Endothelial cell of umbilical vein (primary cell): ENCODE measurements at regions of chr11 and their contacts with region 1.

Region 1: DNA sequence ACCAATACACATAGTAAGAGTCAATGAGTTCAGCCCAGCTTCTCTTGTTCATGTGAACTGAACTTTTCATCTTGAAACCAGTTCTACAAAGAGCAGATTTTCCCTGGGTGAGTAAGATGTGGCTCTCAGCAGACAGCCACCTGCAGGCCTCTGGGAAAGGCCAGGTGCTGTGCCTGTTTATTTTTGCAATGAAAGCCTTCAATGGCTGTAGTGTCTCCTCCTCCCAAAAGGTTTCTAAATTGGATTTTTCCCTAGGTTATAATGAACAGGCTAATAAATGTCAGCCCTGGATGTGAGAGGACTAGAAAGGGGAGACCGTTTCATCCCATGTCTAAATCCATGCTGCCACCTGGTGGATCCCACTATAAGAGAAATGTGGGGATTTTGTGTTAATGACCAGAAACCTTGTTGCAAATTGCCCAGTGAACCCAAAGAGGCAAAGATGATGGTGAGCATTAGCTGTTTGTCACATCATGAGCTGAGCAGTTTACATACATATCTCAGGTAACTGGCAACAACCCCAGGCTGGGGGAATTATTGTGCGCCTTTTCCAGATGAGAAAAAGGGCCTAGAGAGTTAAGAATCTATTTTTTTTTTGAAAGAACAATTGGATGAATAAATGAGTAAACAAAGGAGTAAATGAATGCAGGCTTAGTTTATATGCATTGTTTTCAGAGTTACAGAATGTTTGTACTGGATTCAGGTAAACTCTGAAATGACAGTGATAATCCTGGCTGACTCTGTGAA is 12.7 kb downstream of the C11orf91 start:
- DNase-seq: peak; percentile 75
- H3K4me3 ChIP-seq: no peak overlapping the region
- H3K27ac ChIP-seq: no peak overlapping the region
- H3K4me1 ChIP-seq: peaks cover 44% of the 10 kb centered on the region
- H3K27me3 ChIP-seq: no peaks in the 10 kb centered on the region
- CTCF ChIP-seq: peak; percentile 51 to 74
- POLR2A ChIP-seq: no peak

Region 2: GRCh38 chr11:32960553-32961164 is 727.2 kb before region 1 on chr11:
- CTCF ChIA-PET with region 1: no interaction called
- POLR2A ChIA-PET with region 1: no interaction called
- dilution Hi-C with region 1: no loop called
- intact Hi-C with region 1: loop called (anchors 10 kb)
- DNase-seq: peak; percentile 60
- H3K4me3 ChIP-seq: no peak overlapping the region
- H3K27ac ChIP-seq: no peak overlapping the region
- H3K4me1 ChIP-seq: no peaks in the 10 kb centered on the region
- H3K27me3 ChIP-seq: no peaks in the 10 kb centered on the region
- CTCF ChIP-seq: peak; percentile 39 to 40
- POLR2A ChIP-seq: no peak

Region 3: DNA sequence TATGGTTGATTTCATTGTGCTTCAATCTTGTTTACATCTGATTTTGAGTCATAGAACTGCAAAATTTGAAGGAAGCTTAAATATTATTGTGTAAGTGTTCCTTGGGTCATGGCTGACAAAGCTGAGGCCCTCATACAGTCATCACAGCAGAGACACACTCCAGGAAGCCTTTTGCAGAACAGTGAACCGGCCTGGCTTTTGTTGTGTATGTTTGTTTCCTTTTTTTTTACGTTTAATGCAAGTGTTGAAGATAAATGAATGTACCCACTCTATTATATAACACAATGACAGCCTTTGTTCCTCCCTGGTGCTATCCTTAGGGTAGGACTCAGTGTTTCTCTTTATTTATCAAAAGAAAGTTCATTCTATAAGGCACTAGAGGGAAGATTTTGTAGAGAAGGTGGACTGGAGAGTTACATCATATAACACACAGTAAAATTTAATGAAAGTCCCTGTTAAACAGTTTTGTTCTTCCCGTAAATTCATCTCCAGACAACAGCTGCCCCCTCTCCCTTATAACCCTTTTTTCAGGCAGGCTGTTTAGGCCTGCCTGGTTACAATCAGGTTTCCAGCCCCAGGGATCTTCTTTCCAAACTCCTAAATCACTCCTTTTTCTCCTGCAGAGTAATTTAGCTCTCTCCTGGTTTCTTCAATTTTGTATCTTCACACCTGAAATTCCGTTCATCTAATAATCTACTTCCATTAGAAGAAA is 492.3 kb before region 1 on chr11:
- CTCF ChIA-PET with region 1: no interaction called
- POLR2A ChIA-PET with region 1: no interaction called
- dilution Hi-C with region 1: no loop called
- intact Hi-C with region 1: no loop called
- DNase-seq: no peak
- H3K4me3 ChIP-seq: no peak overlapping the region
- H3K27ac ChIP-seq: no peak overlapping the region
- H3K4me1 ChIP-seq: no peaks in the 10 kb centered on the region
- H3K27me3 ChIP-seq: no peaks in the 10 kb centered on the region
- CTCF ChIP-seq: no peak
- POLR2A ChIP-seq: no peak

Region 4: DNA sequence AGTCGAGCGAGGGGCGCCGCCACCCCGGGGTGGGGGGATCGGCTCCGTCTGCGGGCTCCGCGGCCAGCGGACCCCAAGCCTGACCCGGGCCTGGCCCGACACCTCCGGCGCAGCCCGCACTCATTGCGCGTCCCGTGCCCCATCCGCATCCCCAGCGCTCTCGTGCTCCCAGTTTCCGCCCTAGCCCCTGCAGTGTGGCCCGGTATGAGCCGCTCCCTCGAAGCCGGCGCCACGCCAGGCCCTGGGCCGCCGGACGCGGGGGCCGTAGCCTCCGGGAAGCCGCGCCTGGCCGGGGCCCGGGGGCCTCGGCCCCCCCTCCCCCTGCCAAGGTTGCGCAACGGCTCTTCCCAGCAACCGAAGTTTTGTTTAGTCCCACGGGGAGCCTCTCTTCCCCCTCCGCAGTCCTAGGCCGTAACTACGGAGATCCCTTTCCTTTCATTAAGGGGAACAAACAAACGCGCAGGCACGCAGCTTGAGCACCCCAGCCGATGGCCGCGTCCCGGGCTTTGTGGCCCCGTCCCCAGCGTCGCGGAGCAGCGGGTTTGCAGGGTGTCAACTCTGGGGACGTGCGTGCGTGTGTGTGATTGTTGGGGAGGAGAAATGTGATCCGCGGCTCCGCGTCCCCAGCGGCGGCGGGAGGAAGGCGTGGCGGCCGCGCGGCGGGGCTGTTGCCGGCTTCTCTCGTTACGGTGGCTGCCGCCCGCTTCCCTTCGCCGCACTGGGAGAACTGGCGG is 429.8 kb before region 1 on chr11:
- CTCF ChIA-PET with region 1: no interaction called
- POLR2A ChIA-PET with region 1: no interaction called
- dilution Hi-C with region 1: no loop called
- intact Hi-C with region 1: loop called (anchors 2 kb)
- DNase-seq: peak; percentile 82
- H3K4me3 ChIP-seq: peak overlapping the region; percentile 59 to 93 (median 88)
- H3K27ac ChIP-seq: peak overlapping the region; percentile 98
- H3K4me1 ChIP-seq: peaks cover 18% of the 10 kb centered on the region
- H3K27me3 ChIP-seq: no peaks in the 10 kb centered on the region
- CTCF ChIP-seq: peak; percentile 7 to 29
- POLR2A ChIP-seq: no peak

Region 5: DNA sequence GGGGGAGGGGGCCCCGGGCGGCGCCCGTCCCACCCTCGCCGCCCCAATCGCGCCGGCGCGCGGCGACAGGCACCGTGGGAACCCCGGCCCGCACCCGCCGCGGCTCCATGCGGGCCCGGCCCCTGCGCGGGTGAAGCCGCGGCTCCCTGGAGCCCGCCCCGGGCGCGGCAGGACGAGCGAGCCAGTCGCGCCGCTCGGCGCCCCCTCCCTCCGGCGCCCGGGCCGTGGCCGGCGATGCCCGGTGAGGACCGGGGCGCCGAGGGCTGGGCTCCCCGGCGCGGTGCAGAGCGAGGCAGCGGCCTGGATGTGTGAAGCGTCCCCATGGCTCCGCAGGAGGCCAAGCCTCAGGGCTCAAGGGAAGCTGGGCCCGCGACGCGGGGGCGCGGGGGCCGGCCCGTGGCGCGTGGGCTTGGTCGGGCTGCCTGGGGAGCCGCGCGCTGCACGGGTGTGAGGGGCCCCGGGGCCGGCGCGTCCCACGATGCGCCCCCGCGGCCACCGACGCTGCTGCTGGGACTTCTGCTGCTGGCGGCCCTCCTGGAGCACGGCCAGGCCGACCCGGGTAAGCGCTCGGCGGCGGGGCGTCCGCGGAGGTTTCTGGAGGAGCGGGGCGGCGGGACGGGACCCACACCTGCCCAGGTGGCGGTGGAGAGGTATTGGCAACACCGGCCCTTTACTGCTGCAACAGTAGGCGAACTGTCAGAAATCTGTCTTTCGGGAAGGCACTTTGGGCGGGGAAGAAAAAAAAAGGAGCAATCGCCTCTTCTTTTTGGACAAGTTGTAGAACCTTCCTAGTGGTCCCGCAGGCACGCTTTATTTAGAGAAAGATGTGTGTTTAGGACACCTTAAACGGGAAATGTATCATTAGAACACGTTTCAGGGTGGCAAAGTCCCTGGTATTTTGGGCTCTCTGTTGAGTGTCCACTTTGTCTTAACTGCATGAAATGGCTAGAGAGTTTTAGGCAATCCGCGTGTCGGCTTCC is 311.3 kb before region 1 on chr11:
- CTCF ChIA-PET with region 1: interaction called, 4 read pairs
- POLR2A ChIA-PET with region 1: no interaction called
- dilution Hi-C with region 1: no loop called
- intact Hi-C with region 1: loop called (anchors 1 kb)
- DNase-seq: peak; percentile 25
- H3K4me3 ChIP-seq: peak overlapping the region; percentile 68 to 84 (median 79)
- H3K27ac ChIP-seq: peak overlapping the region; percentile 70
- H3K4me1 ChIP-seq: peaks cover 45% of the 10 kb centered on the region
- H3K27me3 ChIP-seq: no peaks in the 10 kb centered on the region
- CTCF ChIP-seq: no peak
- POLR2A ChIP-seq: no peak

Region 6: DNA sequence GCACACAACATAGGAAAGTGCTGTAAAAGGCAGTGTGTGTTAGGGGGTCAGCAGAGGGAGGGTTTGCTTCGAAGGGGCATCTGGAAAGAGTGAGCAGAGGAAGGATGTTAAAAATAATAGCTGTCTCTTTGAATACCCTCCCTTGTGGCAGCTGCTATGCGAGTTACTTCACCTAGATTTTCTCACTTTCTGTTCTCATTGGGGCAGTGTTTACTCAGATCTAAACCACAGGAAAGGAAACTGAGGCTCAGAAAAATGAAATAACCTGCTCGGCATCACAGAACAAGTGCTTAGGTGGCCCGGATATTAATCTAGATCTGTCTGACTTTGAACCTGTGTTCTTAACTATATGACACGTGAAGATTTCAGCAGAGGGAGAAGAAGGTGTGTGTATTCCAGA is 112.6 kb before region 1 on chr11:
- CTCF ChIA-PET with region 1: no interaction called
- POLR2A ChIA-PET with region 1: no interaction called
- dilution Hi-C with region 1: no loop called
- intact Hi-C with region 1: no loop called
- DNase-seq: no peak
- H3K4me3 ChIP-seq: no peak overlapping the region
- H3K27ac ChIP-seq: no peak overlapping the region
- H3K4me1 ChIP-seq: no peaks in the 10 kb centered on the region
- H3K27me3 ChIP-seq: no peaks in the 10 kb centered on the region
- CTCF ChIP-seq: no peak
- POLR2A ChIP-seq: no peak

Region 7: GRCh38 chr11:33646629-33647028 is 41.3 kb before region 1 on chr11:
- CTCF ChIA-PET with region 1: no interaction called
- POLR2A ChIA-PET with region 1: no interaction called
- dilution Hi-C with region 1: no loop called
- intact Hi-C with region 1: loop called (anchors 2 kb)
- DNase-seq: peak; percentile 59
- H3K4me3 ChIP-seq: no peak overlapping the region
- H3K27ac ChIP-seq: peak overlapping the region; percentile 3
- H3K4me1 ChIP-seq: peaks cover 9% of the 10 kb centered on the region
- H3K27me3 ChIP-seq: no peaks in the 10 kb centered on the region
- CTCF ChIP-seq: no peak
- POLR2A ChIP-seq: no peak

Region 8: DNA sequence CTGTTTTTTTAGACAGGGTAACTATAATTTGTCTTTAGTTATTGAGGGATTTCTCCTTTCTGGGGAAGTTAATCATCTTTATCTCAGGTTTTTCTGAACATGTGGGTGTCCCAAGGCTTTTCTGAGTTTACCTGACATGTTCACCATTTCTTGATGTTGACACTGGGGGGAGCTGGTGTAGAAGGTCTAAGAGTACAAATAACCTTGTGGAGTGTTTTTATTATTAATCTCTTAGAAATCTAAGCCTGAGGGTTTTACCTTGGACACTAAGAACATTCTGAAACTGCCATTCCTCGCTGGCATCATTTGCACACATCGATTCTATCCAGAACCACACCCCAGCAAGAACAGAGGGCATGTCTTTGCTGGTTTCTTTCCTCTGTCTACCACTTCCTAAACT is 28.3 kb after region 1 on chr11:
- CTCF ChIA-PET with region 1: interaction called, 11 read pairs
- POLR2A ChIA-PET with region 1: no interaction called
- dilution Hi-C with region 1: no loop called
- intact Hi-C with region 1: no loop called
- DNase-seq: peak; percentile 66
- H3K4me3 ChIP-seq: no peak overlapping the region
- H3K27ac ChIP-seq: peak overlapping the region; percentile 0
- H3K4me1 ChIP-seq: peaks cover 29% of the 10 kb centered on the region
- H3K27me3 ChIP-seq: no peaks in the 10 kb centered on the region
- CTCF ChIP-seq: peak; percentile 27 to 41
- POLR2A ChIP-seq: no peak

Region 9: DNA sequence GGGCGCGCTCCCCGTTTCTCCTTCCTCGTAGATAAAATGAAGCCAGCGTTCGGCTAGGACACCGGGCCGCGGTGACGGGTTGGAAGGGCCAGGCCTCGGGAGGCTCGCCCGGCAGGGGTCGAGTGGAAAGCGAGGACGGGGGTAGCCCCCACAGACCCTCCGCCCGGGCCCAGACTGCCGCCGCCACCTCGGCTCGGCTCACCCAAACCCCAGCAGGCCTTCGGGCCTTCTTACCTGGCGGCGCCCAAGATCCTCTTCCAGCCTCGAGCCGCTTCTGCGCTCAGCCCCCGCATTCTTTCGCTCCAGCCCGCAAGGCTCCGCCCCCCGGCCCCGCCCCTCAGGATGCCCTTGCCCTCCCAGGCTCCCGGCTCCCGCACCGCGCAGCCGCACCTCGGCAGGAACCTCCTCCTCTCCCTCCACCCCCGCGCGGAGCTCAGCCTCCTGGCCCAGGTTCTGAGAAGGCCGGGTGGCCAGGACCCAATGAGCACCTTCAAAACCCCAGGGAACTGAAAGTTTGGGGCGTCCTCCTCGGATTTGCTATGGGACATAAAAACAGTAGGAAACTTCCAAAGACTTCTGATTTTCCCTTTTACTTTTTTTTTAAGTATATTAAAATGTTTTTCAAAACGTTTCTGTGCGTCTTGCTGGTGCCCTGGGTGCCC is 48.4 kb after region 1 on chr11 and contains the start of gene CD59:
- CTCF ChIA-PET with region 1: interaction called, 10 read pairs
- POLR2A ChIA-PET with region 1: interaction called, 8 read pairs
- dilution Hi-C with region 1: no loop called
- intact Hi-C with region 1: loop called (anchors 1 kb)
- DNase-seq: peak; percentile 96
- H3K4me3 ChIP-seq: peak within 1 kb of the TSS; percentile 74 to 98 (median 95)
- H3K27ac ChIP-seq: peak within 1 kb of the TSS; percentile 93
- H3K4me1 ChIP-seq: peaks cover 43% of the 10 kb centered on the region
- H3K27me3 ChIP-seq: no peaks in the 10 kb centered on the region
- CTCF ChIP-seq: no peak
- POLR2A ChIP-seq: peak; percentile 93
- total RNA-seq, gene CD59: 1,084 and 1,141 TPM in 2 replicates

Region 10: DNA sequence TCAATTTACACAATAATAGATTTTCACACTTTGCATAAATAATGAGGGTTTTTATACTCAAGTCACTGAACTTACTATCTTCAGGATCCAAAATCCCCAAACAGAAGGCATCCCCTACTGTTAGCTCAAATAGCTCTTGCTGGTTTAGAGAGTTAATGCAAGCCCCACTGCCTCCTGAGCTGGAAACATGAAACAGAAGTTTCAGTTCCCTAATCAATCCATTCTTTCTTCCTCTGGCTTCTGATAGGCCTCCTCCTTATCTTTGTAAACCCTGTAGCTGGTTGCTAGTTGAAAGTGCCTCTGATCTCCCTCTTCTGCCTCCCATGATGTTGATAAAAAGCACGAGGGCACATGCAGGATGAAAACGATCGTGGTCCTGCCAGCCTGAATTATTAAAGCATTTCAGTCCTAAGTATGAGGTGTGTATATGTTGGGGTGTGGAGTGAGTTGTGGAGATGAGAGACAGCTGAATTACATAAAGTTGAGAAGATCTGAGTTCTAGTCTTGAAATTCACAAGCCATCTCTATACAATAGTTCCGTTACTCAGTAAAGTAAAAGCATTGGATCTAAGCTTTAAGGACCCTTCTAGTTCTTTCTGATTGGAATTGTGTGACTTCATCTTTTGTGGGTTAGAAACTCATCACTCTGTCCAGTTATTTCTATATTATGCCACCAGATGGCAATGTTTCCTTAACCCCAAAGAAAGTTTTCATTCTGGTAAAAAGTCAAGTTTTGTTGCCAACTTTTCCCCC is 898.0 kb after region 1 on chr11:
- CTCF ChIA-PET with region 1: no interaction called
- POLR2A ChIA-PET with region 1: no interaction called
- dilution Hi-C with region 1: no loop called
- intact Hi-C with region 1: no loop called
- DNase-seq: peak; percentile 55
- H3K4me3 ChIP-seq: no peak overlapping the region
- H3K27ac ChIP-seq: no peak overlapping the region
- H3K4me1 ChIP-seq: no peaks in the 10 kb centered on the region
- H3K27me3 ChIP-seq: peaks cover 5 to 11% of the 10 kb centered on the region in 2 experiments
- CTCF ChIP-seq: peak; percentile 36 to 38
- POLR2A ChIP-seq: no peak